Posterior vena cava (tissue), 2 donors: ENCODE measurements at regions of chr10 and their contacts with region 1.

Region 1: DNA sequence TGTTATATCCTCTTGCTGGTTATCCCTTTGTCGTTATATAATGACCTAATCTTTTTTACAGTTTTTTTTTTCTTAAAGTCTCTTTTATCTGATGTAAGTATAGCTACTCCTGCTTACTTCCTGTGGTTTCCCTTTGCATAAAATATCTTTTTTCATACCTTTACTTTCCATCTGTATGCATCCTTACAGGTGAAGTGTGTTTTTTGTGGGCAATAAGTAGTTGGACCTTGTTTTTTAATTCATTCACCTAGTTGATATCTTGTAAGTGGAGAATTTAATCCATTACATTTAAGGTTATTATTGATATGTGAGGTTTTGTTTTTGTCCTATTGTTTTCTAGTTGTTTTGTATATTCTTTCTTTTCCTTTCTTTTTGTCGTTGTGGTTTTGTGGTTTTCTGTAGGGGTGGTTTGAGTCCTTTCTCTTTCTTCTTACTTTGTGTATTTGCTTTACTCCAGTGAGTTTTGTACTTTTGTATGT is 168.6 kb downstream of the MLLT10 start:
- DNase-seq: no peak

Region 2: GRCh38 chr10:20776384-20777118 is 926.1 kb before region 1 on chr10:
- intact Hi-C with region 1: loop called in 1 of 2 experiments (anchors 5 kb)
- DNase-seq: no peak

Region 3: DNA sequence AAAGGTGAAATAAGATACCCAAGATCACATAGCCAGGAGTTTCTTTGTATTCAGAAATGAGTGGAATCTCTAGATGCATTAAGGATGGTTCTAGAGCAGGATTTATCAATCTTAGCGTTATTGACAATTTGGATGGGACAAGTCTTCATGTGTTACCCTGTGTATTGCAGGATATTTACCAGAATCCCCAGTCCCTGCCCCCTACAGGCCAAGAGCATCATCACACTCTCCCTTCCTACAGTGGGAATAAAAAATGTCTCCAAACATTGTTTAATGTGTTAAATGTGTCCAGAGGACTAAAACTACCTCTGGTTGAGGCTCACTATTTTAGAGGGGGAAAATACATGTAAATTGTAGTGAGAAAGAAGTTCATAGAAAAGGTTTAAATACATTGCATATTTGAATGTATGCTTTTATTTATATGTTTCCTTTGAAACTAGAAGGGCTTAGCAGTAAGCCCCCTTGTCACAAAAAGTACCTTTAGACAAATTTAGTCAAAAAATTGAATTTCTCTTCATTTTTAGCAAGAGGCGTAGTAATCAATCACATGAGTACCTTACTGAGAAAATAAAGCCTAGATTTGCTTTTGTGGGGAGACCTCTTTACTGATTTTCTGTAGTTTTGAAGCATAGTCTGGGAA is 27.4 kb before region 1 on chr10:
- intact Hi-C with region 1: no loop called
- DNase-seq: no peak